ENCODE measurements at regions of chr11 and their contacts with region 1.

Region 1: DNA sequence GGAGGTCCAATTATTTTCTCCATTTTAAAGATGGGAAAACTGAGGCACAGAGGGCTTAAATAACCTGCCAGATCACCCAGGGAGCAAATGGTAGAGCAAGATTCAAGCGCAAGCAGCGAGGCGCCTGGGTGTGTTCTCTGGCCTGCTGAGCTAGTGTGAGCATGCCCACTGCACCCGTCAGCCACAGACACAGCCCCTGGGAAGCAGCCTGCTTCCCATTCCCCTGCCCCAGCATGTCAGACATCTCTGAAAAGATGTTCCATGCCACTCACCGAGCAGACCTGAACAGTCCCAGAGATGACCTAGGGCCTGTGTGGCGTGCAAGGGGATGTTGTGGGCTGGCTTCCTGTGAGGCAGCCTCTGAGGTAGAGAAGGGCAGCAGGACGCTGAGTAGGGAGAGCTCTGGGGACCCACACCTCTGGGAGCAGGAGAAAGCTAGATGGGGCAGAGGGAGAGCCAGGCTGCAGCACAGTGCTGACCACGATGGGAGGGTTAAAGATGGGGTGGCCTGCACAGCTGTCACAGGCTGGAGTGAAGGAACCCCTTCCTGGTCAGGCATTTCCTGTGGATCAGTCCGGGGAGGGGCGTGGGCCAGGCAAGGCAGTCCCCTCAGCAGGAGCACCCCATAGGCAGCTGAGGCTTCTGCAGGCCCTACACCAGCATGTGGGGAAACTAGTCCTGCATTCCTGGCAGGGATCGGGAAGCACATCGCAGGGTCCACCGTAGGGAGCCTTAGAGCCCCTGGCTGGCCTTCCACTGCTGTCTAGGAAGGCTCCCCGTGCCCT is 101.4 kb downstream of the GALNT18 start:
- DNase-seq: no peak
- H3K4me3 ChIP-seq: no peak overlapping the region
- H3K27ac ChIP-seq: no peak overlapping the region
- H3K4me1 ChIP-seq: peaks cover 0 to 35% (median 7%) of the 10 kb centered on the region in 4 donors
- H3K27me3 ChIP-seq: no peaks in the 10 kb centered on the region
- CTCF ChIP-seq: no peak

Region 2: GRCh38 chr11:11416502-11416901 is 103.9 kb before region 1 on chr11:
- intact Hi-C with region 1: loop called (anchors 10 kb)
- DNase-seq: peak in 1 of 2 donors; percentile 54
- H3K4me3 ChIP-seq: no peak overlapping the region
- H3K27ac ChIP-seq: peak overlapping the region; percentile 76 to 77
- H3K4me1 ChIP-seq: peaks cover 0 to 33% (median 28%) of the 10 kb centered on the region in 4 donors
- H3K27me3 ChIP-seq: no peaks in the 10 kb centered on the region
- CTCF ChIP-seq: no peak

Region 3: GRCh38 chr11:11463405-11463804 is 57.0 kb before region 1 on chr11:
- intact Hi-C with region 1: no loop called
- DNase-seq: no peak
- H3K4me3 ChIP-seq: no peak overlapping the region
- H3K27ac ChIP-seq: peak overlapping the region; percentile 42 to 54
- H3K4me1 ChIP-seq: peaks cover 0 to 78% (median 32%) of the 10 kb centered on the region in 4 donors
- H3K27me3 ChIP-seq: no peaks in the 10 kb centered on the region
- CTCF ChIP-seq: no peak

Measured in tibial artery (tissue), 4 donors.